CD4-positive, alpha-beta T cell (primary cell): ENCODE measurements at regions of chr16 and their contacts with region 1.

Region 1: DNA sequence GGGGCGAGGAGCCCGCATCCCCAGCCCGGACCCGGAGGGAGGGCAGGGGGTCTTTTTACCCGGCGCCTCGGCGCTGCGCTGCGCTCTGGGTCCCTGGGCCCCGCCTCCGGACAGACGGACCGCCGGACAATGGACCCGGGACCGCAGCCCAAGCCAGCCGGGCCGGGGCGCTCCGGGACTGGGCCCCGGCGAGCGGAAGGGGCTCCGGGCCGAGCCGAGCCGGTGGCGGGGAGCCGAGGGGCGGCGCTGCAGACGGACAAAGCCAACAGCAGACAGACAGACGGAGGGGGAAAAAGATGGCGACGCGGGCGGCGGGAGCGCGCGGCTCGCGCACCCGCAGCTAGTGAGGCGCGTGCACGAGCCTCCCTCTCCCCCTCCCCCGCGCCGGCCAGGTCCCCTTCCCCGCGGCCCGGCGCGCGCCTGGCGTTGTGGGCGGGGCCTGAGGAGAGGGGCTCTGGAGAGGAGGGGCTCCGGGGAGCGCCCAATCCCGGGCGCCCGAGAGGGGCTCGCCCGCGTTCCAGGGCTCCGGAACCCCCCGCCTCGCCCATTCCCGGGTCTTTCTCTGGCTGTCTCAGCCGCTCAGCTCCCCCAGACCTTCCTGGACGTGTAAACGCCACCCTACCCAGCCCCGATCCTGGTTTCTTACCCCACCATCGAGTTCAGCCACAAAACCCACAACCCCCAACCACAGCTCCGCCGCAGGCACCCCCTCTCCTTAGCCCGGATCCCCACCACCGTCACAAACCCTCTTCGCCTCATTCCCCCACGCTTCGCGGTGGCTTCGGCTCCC is at the start of gene ZNF821:
- DNase-seq: peak; percentile 41 to 92 (median 66)
- ATAC-seq: peak; percentile 43
- H3K4me3 ChIP-seq: peak within 1 kb of the TSS; percentile 66
- H3K4me3 Mint-ChIP-seq: peak within 1 kb of the TSS; percentile 100
- H3K27ac ChIP-seq: peak within 1 kb of the TSS; percentile 55 to 89
- H3K27ac Mint-ChIP-seq: peak within 1 kb of the TSS; percentile 95
- H3K4me1 ChIP-seq: peaks cover 43% of the 10 kb centered on the region
- H3K4me1 Mint-ChIP-seq: peaks cover 55% of the 10 kb centered on the region
- H3K27me3 ChIP-seq: no peaks in the 10 kb centered on the region
- H3K27me3 Mint-ChIP-seq: no peaks in the 10 kb centered on the region
- CTCF ChIP-seq: no peak
- total RNA-seq, gene ZNF821: 17.3 to 18.3 TPM

Region 2: DNA sequence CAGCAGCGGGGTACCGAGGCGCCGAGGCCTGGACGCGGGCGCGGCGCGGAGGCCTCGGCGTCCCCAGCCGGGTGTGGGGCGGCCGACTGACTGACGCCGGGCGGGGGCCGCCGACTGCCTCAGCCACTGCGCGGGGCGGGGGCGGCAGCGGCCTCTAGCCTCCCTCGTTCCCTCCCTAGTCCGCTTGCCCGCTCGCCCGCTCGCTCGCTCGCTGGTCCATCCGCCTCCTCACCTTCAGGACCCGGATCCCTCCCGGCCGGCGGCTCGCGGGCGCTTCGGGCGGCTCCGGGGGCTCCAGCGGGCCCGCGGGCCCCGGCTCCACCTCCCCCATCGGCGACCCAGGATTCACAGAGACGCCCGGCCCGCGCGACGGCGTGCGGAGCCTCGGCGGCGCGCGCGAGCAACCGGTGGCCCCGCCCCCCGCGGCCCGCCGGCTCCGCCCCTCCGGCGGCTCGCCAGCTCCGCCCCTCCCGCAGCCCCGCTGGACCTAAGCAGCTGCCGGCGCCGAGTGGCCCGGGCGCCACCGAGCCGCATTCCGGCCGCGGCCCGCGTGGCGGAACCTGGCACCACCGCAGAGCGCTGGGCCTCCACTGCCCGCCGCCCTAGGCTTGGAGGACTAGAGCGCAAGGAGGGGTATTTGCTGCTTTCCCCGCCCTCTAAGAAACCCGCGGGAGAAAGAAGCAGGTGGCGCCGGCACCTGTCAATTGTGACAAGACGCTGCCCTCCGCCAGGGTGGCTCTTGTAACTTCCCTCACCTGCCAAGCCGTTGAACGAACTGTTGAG is 160.3 kb before region 1 on chr16:
- CTCF ChIA-PET with region 1: interaction called, 3 read pairs
- POLR2A ChIA-PET with region 1: interaction called, 4 read pairs
- intact Hi-C with region 1: loop called (anchors 5 kb)
- DNase-seq: peak; percentile 59 to 93 (median 78)
- ATAC-seq: peak; percentile 81
- H3K4me3 ChIP-seq: peak overlapping the region; percentile 84
- H3K4me3 Mint-ChIP-seq: peak overlapping the region; percentile 92
- H3K27ac ChIP-seq: no peak overlapping the region
- H3K27ac Mint-ChIP-seq: peak overlapping the region; percentile 74
- H3K4me1 ChIP-seq: peaks cover 11% of the 10 kb centered on the region
- H3K4me1 Mint-ChIP-seq: peaks cover 18% of the 10 kb centered on the region
- H3K27me3 ChIP-seq: no peaks in the 10 kb centered on the region
- H3K27me3 Mint-ChIP-seq: no peaks in the 10 kb centered on the region
- CTCF ChIP-seq: no peak

Region 3: GRCh38 chr16:71808593-71809459 is 75.2 kb before region 1 on chr16 and contains the start of gene AP1G1:
- CTCF ChIA-PET with region 1: interaction called, 25 read pairs
- POLR2A ChIA-PET with region 1: interaction called, 190 read pairs
- intact Hi-C with region 1: loop called (anchors 1 to 5 kb)
- DNase-seq: peak; percentile 84 to 99 (median 90)
- ATAC-seq: peak; percentile 87
- H3K4me3 ChIP-seq: peak within 1 kb of the TSS; percentile 91
- H3K4me3 Mint-ChIP-seq: peak within 1 kb of the TSS; percentile 100
- H3K27ac ChIP-seq: peak within 1 kb of the TSS; percentile 98 to 99
- H3K27ac Mint-ChIP-seq: peak within 1 kb of the TSS; percentile 100
- H3K4me1 ChIP-seq: peaks cover 43% of the 10 kb centered on the region
- H3K4me1 Mint-ChIP-seq: peaks cover 47% of the 10 kb centered on the region
- H3K27me3 ChIP-seq: no peaks in the 10 kb centered on the region
- H3K27me3 Mint-ChIP-seq: no peaks in the 10 kb centered on the region
- CTCF ChIP-seq: no peak
- total RNA-seq, gene AP1G1: 171 to 175 TPM

Region 4: GRCh38 chr16:71855937-71856662 is 27.9 kb before region 1 on chr16:
- CTCF ChIA-PET with region 1: interaction called, 35 read pairs
- POLR2A ChIA-PET with region 1: interaction called, 15 read pairs
- intact Hi-C with region 1: no loop called
- DNase-seq: peak in 2 of 14 experiments; percentile 20 to 60
- ATAC-seq: peak; percentile 63
- H3K4me3 ChIP-seq: no peak overlapping the region
- H3K4me3 Mint-ChIP-seq: no peak overlapping the region
- H3K27ac ChIP-seq: peak overlapping the region in 1 of 2 donors; percentile 11
- H3K27ac Mint-ChIP-seq: peak overlapping the region; percentile 68
- H3K4me1 ChIP-seq: peaks cover 22% of the 10 kb centered on the region
- H3K4me1 Mint-ChIP-seq: peaks cover 66% of the 10 kb centered on the region
- H3K27me3 ChIP-seq: no peaks in the 10 kb centered on the region
- H3K27me3 Mint-ChIP-seq: no peaks in the 10 kb centered on the region
- CTCF ChIP-seq: no peak

Region 5: DNA sequence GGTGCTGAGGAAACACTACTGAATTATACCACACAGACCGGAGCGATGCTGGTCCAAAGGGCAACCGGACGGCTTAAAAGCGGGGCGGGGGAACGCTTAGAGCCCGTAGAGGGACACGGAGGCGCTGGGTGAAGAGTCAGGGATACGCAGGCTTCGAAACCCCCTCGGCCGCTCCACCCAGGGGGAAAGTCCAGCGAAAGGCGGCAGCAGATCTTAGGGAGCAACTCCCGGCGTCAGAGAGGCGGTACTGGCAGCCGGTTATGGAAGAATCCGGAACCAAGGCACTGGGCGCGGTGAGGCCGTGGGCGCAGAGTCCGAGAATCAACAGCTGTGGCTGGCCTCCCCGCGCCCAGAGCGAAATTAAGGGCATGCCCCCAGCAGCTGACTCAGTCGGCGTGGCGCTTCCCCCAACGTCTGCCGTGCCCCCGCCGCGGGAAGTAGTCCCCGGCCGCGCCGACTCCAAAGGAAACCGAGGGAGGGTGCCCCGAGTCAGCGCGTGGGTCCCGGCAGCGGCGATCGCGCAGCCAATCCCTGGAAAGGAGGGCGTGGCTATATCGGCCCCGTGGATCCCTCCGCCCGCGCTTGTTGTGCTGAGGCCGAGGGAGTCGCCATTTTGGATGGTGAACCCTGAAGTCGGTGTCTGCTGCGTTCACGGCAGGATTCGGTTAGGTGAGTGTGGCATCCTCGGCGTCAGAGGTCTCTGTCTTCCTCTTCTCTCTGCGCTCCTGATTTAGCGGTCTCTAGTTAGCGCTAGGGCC is 11.1 kb after region 1 on chr16 and contains the start of gene IST1:
- CTCF ChIA-PET with region 1: interaction called, 100 read pairs
- POLR2A ChIA-PET with region 1: interaction called, 219 read pairs
- intact Hi-C with region 1: loop called (anchors 1 kb)
- DNase-seq: peak; percentile 95 to 99 (median 98)
- ATAC-seq: peak; percentile 91
- H3K4me3 ChIP-seq: peak within 1 kb of the TSS; percentile 98
- H3K4me3 Mint-ChIP-seq: peak within 1 kb of the TSS; percentile 99
- H3K27ac ChIP-seq: peak within 1 kb of the TSS; percentile 94 to 95
- H3K27ac Mint-ChIP-seq: peak within 1 kb of the TSS; percentile 98
- H3K4me1 ChIP-seq: peaks cover 44% of the 10 kb centered on the region
- H3K4me1 Mint-ChIP-seq: peaks cover 36% of the 10 kb centered on the region
- H3K27me3 ChIP-seq: no peaks in the 10 kb centered on the region
- H3K27me3 Mint-ChIP-seq: no peaks in the 10 kb centered on the region
- CTCF ChIP-seq: no peak
- total RNA-seq, gene IST1: 411 to 412 TPM

Region 6: DNA sequence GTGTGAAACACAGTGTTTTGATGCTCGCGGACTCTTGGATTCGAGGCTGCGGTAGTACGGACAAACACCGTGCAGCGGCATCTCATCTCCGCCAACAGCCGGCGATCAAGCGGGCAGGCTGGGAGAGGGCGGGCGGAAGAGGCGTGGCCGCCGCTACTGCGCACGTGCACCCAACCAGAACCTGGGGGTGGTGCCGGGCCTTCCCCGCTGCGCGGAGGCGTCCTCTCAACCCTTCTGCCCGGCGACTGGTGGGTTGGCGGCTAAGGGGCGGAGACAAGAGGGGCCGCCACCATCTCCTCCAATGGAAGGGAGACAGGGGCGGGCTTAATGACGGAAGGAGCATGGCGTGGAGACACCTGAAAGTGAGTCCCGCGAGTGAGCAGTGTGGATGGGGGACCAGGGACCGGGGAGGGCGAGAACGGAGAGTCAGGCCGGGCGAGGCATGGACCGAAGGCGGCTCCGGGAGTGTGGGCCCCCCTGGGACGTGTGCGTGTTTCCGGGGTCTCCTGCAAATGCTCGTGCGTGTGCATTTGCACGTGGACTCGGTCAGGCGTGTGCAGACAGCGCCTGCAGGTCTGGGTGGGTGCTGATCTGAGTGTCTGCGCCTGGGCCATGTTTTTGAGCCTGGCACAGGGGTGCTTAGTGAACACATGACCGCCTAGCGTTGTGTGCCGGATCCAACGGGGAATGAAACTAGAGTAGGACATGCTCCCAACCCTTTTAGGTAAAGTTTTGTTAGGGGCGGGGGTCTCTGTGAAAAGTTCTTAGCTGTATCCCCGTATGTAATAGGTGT is 124.6 kb after region 1 on chr16 and contains the start of gene DHODH:
- CTCF ChIA-PET with region 1: no interaction called
- POLR2A ChIA-PET with region 1: no interaction called
- intact Hi-C with region 1: loop called (anchors 5 kb)
- DNase-seq: peak; percentile 94 to 99 (median 97)
- ATAC-seq: peak; percentile 99
- H3K4me3 ChIP-seq: peak within 1 kb of the TSS; percentile 99
- H3K4me3 Mint-ChIP-seq: peak within 1 kb of the TSS; percentile 96
- H3K27ac ChIP-seq: peak within 1 kb of the TSS; percentile 29 to 58
- H3K27ac Mint-ChIP-seq: peak within 1 kb of the TSS; percentile 73
- H3K4me1 ChIP-seq: peaks cover 19% of the 10 kb centered on the region
- H3K4me1 Mint-ChIP-seq: peaks cover 12% of the 10 kb centered on the region
- H3K27me3 ChIP-seq: no peaks in the 10 kb centered on the region
- H3K27me3 Mint-ChIP-seq: no peaks in the 10 kb centered on the region
- CTCF ChIP-seq: no peak
- total RNA-seq, gene DHODH: 2.5 to 2.7 TPM

Region 7: DNA sequence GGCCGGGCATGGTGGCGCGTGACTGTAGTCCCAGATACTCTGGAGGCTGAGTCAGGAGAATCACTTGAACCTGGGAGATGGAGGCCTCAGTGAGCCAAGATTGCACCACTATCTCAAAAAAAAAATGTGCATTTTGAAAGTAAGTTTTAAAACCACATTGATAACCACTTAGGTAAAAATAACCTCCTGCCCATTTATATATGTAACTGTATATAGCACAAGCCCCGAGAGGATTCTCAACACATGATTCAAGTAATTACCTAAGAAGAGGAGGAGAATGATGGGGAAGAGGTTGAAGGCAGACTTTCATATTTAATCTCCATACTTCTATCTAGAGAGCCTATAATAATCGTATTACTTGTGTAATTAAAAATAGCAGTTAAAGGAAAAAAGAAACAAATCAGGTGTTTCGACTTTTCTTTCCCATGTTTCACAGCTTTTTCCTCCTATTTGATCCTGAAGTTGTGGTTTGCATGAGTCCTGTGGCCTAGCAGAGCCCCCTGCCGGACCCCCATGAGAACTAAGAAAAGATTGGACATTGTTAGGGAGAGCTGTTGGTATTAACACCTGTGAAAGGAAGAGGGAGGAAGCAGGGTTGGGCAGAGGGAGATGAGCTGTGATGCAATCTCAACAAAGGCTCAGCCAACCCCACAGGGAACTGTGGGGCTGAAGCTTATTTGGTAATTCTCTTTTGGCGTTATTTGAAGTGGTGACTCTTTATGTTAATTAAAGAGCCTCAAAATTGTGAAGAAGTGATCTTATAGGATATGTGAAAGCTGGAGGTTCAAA is 265.8 kb after region 1 on chr16:
- CTCF ChIA-PET with region 1: no interaction called
- POLR2A ChIA-PET with region 1: no interaction called
- intact Hi-C with region 1: no loop called
- DNase-seq: no peak
- ATAC-seq: no peak
- H3K4me3 ChIP-seq: no peak overlapping the region
- H3K4me3 Mint-ChIP-seq: no peak overlapping the region
- H3K27ac ChIP-seq: no peak overlapping the region
- H3K27ac Mint-ChIP-seq: no peak overlapping the region
- H3K4me1 ChIP-seq: no peaks in the 10 kb centered on the region
- H3K4me1 Mint-ChIP-seq: no peaks in the 10 kb centered on the region
- H3K27me3 ChIP-seq: no peaks in the 10 kb centered on the region
- H3K27me3 Mint-ChIP-seq: no peaks in the 10 kb centered on the region
- CTCF ChIP-seq: no peak

Region 8: DNA sequence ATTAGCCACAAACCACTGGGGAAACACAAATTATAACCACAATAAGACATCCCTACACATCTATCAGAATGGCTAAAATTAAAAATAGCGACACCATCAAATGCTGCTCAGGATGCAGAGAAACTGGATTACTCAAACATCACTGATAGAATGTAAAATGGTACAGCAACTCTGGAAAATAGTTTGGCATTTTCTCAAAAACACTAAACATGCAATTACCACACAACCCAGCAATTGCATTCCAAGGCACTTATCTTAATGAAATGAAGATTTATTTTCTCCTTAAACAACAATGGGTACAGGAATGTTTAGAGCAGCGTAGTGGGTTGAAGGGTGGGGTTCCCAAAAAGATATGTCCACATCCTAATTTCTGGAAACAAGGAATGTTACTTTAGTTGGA is 596.9 kb after region 1 on chr16:
- CTCF ChIA-PET with region 1: no interaction called
- POLR2A ChIA-PET with region 1: no interaction called
- intact Hi-C with region 1: no loop called
- DNase-seq: no peak
- ATAC-seq: no peak
- H3K4me3 ChIP-seq: no peak overlapping the region
- H3K4me3 Mint-ChIP-seq: no peak overlapping the region
- H3K27ac ChIP-seq: no peak overlapping the region
- H3K27ac Mint-ChIP-seq: peak overlapping the region; percentile 0
- H3K4me1 ChIP-seq: peaks cover 5% of the 10 kb centered on the region
- H3K4me1 Mint-ChIP-seq: peaks cover 33% of the 10 kb centered on the region
- H3K27me3 ChIP-seq: no peaks in the 10 kb centered on the region
- H3K27me3 Mint-ChIP-seq: no peaks in the 10 kb centered on the region
- CTCF ChIP-seq: no peak